Ascending aorta (tissue), 2 donors: ENCODE measurements at regions of chr7 and their contacts with region 1.

Region 1: DNA sequence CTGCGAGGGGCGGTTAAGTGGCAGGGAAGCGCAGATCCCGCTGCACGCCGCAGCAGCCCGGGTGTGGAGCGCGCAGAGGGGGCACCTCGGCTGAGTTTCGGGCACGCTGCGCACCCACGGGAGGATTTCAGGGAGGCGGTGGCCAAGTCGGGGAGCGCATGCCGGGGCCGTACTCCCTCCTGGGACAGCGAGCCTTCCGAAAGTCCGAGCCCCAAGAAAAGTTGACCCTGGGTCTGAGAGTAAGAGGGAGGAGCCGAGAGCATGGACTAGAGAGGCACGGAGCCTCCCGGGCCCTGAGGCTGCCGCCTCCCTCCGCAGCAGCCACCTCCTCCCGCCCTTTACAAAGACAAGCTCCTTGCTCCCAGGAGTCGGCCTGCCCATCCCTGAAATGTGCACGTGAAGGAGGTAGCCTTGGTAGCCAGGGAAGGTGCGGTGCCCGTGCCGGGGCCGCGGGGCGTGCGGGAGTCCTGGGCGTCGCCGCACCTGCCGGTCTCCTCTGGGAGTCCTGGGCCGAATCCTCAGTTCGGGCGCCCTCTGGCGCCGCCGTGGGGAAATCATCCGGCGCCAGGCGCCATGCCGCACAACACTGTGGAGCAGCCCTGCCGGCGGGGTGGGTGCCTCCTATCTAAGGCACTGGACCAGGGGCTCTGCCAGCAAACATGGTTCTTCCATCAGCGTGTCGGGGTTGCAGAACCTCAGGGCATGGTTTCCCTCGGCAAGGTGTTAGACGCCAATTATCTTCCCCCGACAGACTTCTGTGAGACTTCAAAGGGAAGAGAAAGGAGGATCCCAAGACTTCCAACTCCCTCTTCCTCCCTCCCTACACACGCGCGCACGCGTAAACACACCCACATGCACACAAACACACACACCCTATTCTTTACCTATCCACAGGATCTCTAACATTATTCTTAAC is 104.0 kb downstream of the TRIL start:
- DNase-seq: peak; percentile 17 to 87
- H3K4me3 ChIP-seq: peak overlapping the region; percentile 60 to 65
- H3K27ac ChIP-seq: no peak overlapping the region
- H3K4me1 ChIP-seq: peaks cover 0 to 11% of the 10 kb centered on the region in 2 donors
- H3K27me3 ChIP-seq: no peaks in the 10 kb centered on the region
- CTCF ChIP-seq: peak; percentile 85 to 95 (median 87)

Region 2: DNA sequence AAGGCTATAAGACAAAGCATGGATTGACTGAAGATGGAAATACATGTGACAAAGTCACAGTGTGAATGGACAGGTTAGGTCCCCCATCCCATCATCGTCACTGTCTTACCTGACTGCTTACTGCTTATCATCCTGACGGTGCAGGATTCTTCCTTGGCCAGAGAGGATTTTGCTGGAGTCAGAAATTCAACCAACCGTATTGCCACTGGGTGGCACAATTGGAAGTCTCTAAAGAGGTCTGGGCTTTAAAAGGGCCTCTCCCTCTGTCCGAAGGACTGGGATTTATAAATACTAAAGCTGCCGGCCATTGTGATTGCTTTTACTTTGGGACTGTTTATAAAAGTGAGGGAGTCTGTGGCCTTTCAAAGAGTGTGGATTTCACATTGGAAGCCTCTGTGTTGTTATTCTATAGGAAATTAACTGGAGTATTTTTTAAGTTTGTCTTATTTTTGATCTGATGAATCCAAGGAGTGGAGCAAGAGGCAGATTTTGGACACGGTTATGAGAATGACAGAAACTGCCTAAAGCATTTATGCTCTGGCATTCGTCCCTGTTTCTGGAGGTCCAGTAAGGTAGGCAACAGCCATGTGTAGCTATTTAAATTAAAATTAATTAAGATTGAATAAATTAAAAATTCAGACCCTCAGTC is 555.1 kb before region 1 on chr7:
- intact Hi-C with region 1: loop called (anchors 2 kb)
- DNase-seq: no peak
- H3K4me3 ChIP-seq: no peak overlapping the region
- H3K27ac ChIP-seq: no peak overlapping the region
- H3K4me1 ChIP-seq: no peaks in the 10 kb centered on the region
- H3K27me3 ChIP-seq: no peaks in the 10 kb centered on the region
- CTCF ChIP-seq: peak in 2 of 3 experiments; percentile 36 to 40

Region 3: GRCh38 chr7:28389504-28390395 is 464.3 kb before region 1 on chr7:
- intact Hi-C with region 1: loop called (anchors 1 kb)
- DNase-seq: no peak
- H3K4me3 ChIP-seq: peak overlapping the region; percentile 18 to 37
- H3K27ac ChIP-seq: no peak overlapping the region
- H3K4me1 ChIP-seq: no peaks in the 10 kb centered on the region
- H3K27me3 ChIP-seq: no peaks in the 10 kb centered on the region
- CTCF ChIP-seq: peak; percentile 59 to 82 (median 81)

Region 4: DNA sequence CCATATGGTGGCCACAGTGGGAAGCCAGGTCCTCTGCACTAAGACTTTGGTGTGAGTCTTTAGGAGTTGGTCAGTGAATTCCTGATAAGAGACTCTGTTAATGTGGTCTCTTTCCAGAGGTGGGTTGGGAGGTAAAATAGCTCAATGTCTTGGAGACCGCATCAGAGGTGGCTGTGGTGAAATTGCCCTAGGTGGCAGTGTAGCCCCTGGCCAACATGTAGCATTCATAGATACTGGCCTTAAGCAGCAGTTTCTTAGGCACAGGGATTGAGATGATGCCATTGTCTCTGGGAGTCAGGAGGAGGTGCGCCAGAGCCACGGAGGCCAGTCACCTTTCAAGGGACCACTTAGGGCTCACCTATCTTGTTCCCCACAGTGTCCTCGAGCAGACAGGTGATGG is 239.0 kb before region 1 on chr7:
- intact Hi-C with region 1: loop called (anchors 5 kb)
- DNase-seq: no peak
- H3K4me3 ChIP-seq: no peak overlapping the region
- H3K27ac ChIP-seq: no peak overlapping the region
- H3K4me1 ChIP-seq: no peaks in the 10 kb centered on the region
- H3K27me3 ChIP-seq: no peaks in the 10 kb centered on the region
- CTCF ChIP-seq: peak in 1 of 3 experiments; percentile 25

Region 5: DNA sequence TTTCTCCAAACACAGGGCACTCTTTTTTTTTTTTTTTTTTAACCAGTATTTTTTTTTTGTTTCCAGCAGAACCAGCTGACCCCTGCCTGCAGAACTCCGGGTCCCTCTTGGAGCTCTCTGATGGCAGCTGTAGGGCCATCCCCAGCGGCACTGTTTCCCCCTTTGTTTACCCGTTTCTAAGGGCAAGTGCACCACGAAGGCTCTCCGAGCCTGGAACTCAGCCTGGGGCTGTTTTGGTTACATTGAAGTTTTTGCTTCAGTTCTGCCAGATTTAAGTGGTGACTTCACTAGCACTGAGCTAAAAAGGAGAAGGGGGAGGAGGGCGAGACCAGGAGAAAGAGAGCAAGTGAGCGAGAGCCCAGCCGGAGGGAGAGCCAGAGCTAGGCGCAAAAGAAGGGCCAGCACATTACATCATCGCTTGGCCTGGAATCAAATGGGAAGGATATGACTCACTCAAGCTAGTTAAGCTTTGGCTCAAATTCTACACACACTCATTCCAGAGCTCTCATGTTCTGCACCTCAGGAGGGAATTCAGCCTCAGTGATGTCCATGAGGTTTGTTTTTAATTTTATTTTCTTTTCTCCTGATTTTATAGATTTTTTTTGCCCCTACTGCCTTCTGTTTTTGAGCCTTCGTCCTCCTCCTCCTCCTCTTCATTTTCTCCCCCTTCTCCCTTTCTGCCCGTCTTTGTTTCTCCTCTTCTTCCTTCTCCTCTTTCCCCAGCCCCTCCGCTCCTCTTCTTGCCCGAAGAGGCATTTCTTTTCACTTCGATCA is 168.3 kb before region 1 on chr7:
- intact Hi-C with region 1: loop called (anchors 5 kb)
- DNase-seq: peak; percentile 88 to 99
- H3K4me3 ChIP-seq: peak overlapping the region; percentile 27 to 66
- H3K27ac ChIP-seq: peak overlapping the region; percentile 80 to 92
- H3K4me1 ChIP-seq: peaks cover 4 to 14% of the 10 kb centered on the region in 2 donors
- H3K27me3 ChIP-seq: no peaks in the 10 kb centered on the region
- CTCF ChIP-seq: no peak

Region 6: GRCh38 chr7:28729281-28729680 is 124.8 kb before region 1 on chr7:
- intact Hi-C with region 1: loop called (anchors 5 kb)
- DNase-seq: no peak
- H3K4me3 ChIP-seq: no peak overlapping the region
- H3K27ac ChIP-seq: no peak overlapping the region
- H3K4me1 ChIP-seq: peaks cover 4 to 20% of the 10 kb centered on the region in 2 donors
- H3K27me3 ChIP-seq: no peaks in the 10 kb centered on the region
- CTCF ChIP-seq: no peak

Region 7: GRCh38 chr7:29309041-29309854 is 455.2 kb after region 1 on chr7:
- intact Hi-C with region 1: no loop called
- DNase-seq: no peak
- H3K4me3 ChIP-seq: no peak overlapping the region
- H3K27ac ChIP-seq: no peak overlapping the region
- H3K4me1 ChIP-seq: no peaks in the 10 kb centered on the region
- H3K27me3 ChIP-seq: no peaks in the 10 kb centered on the region
- CTCF ChIP-seq: no peak